ENCODE measurements at regions of chr10 and their contacts with region 1.

Region 1: GRCh38 chr10:6014241-6014761 is 37.0 kb upstream of the IL15RA start:
- DNase-seq: peak; percentile 30
- ATAC-seq: peak; percentile 91
- H3K4me3 ChIP-seq: no peak overlapping the region
- H3K27ac ChIP-seq: no peak overlapping the region
- H3K4me1 ChIP-seq: no peaks in the 10 kb centered on the region
- H3K27me3 ChIP-seq: no peaks in the 10 kb centered on the region; a peak in 1 of 4 replicates
- CTCF ChIP-seq: peak; percentile 68 to 82 (median 77)
- EP300 ChIP-seq: no peak
- POLR2A ChIP-seq: no peak
- RAD21 ChIP-seq: peak; percentile 89

Region 2: DNA sequence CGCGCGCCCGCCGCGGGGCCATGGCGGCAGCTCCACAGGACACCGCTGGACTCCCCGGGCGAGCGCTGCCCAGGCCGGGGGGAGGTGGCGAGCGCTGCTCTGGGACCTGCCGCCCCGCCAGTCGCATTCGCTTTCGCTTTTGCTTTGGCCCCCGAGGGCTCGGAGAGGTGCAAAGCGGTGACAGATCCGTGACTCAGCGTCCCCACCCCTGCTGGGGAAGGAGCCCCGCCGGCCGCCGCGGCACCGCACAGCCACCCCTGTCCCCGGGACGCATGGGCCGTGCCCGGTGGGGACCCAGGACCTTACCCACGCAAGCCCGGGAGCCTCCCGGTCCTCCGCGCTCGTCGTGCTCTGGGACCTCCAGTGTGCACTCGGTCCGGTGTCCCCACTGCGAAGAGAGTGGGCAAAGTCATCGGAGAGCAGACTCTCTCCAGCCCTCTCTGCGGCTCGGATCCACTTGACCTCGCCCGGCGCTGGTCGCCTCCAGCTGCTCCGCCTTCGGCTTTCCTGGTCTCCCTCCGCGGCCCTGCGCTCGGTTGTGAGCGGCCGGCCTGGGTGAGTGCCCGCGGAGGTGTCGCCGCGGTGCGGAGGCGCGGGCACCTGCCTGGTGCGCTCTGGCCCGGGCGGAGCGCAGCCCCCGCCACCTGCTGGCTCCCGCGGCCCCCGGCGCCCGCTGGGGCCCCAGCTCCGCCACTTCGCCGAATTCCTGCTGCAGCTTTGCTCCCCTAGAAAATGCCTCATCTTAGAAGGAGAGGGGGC is 36.7 kb before region 1 on chr10 and contains the start of gene IL15RA:
- CTCF ChIA-PET with region 1: interaction called, 25 read pairs
- POLR2A ChIA-PET with region 1: interaction called, 3 read pairs
- RAD21 ChIA-PET with region 1: interaction called, 9 read pairs
- SMC1A ChIA-PET with region 1: interaction called, 6 read pairs
- in situ Hi-C with region 1: no loop called
- intact Hi-C with region 1: no loop called
- DNase-seq: no peak
- ATAC-seq: peak; percentile 78
- H3K4me3 ChIP-seq: peak within 1 kb of the TSS; percentile 95
- H3K27ac ChIP-seq: peak within 1 kb of the TSS; percentile 88
- H3K4me1 ChIP-seq: peaks cover 12% of the 10 kb centered on the region
- H3K27me3 ChIP-seq: no peaks in the 10 kb centered on the region; a peak in 1 of 4 replicates
- CTCF ChIP-seq: peak; percentile 22 to 54 (median 30); a peak in 5 of 6 replicates
- EP300 ChIP-seq: no peak
- POLR2A ChIP-seq: peak; percentile 65
- RAD21 ChIP-seq: peak; percentile 21; the same call in 1 of the 2 replicates
- polyA plus RNA-seq, gene IL15RA: 2.0 to 4.2 TPM

Region 3: GRCh38 chr10:6033954-6034353 is 19.7 kb after region 1 on chr10:
- CTCF ChIA-PET with region 1: interaction called, 13 read pairs
- POLR2A ChIA-PET with region 1: no interaction called
- RAD21 ChIA-PET with region 1: no interaction called
- SMC1A ChIA-PET with region 1: interaction called, 13 read pairs
- in situ Hi-C with region 1: no loop called
- intact Hi-C with region 1: no loop called
- DNase-seq: no peak
- ATAC-seq: no peak
- H3K4me3 ChIP-seq: no peak overlapping the region
- H3K27ac ChIP-seq: no peak overlapping the region
- H3K4me1 ChIP-seq: peaks cover 12% of the 10 kb centered on the region; the same call in 1 of the 2 replicates
- H3K27me3 ChIP-seq: no peaks in the 10 kb centered on the region
- CTCF ChIP-seq: no peak
- EP300 ChIP-seq: no peak
- POLR2A ChIP-seq: no peak
- RAD21 ChIP-seq: no peak

Region 4: GRCh38 chr10:6062101-6062771 is 47.9 kb after region 1 on chr10 and contains the start of gene IL2RA:
- CTCF ChIA-PET with region 1: interaction called, 16 read pairs
- POLR2A ChIA-PET with region 1: interaction called, 5 read pairs
- RAD21 ChIA-PET with region 1: no interaction called
- SMC1A ChIA-PET with region 1: interaction called, 9 read pairs
- in situ Hi-C with region 1: no loop called
- intact Hi-C with region 1: no loop called
- DNase-seq: no peak
- ATAC-seq: peak; percentile 65
- H3K4me3 ChIP-seq: peak within 1 kb of the TSS; percentile 43; the same call in 1 of the 2 replicates
- H3K27ac ChIP-seq: peak within 1 kb of the TSS; percentile 14; the same call in 1 of the 2 replicates
- H3K4me1 ChIP-seq: peaks cover 28% of the 10 kb centered on the region
- H3K27me3 ChIP-seq: no peaks in the 10 kb centered on the region
- CTCF ChIP-seq: no peak
- EP300 ChIP-seq: no peak
- POLR2A ChIP-seq: no peak
- RAD21 ChIP-seq: no peak
- polyA plus RNA-seq, gene IL2RA: 3.3 to 5.1 TPM

Region 5: DNA sequence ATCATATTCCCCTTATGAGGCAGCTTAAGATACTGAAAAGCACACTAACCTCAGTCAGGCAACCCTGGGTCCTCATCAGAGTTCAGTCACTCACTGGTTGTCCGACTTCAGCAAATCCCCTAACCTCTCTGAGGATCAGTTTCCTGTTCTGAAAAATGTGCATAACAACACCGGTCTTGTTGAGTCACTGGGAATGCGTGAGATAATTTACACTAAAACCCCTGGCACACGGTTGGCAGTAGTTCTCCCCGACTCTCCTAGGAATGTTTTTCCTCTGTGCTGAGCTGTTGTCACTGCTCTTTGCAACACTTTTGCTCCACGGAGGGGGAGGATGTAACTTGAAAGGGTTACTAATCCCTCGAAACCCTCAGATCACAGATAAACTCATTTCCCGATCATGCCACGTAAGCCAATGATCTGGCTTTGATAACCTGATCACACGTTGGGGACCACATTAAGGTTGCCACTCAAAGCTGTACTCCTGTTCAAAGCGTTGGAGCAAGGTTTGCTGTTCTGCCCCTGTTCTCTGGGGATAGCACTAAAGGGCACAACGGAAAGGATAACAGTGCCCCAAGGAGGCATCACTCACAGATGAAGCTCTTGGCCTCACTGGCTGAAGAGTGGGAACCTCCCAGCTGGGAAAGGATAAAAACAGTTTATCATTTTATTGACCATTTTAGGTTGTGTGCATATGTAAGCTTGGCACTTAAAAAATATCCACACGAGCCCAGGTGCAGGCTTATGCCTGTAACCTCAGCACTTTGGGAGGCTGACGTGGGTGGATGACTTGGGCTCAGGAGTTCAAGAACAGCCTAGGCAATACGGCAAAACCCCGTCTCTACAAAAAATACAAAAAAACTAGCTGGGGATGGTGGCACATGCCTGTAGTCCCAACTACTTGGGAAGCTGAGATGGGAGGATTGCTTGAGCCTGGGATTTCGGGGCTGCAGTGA is 69.5 kb after region 1 on chr10:
- CTCF ChIA-PET with region 1: interaction called, 142 read pairs
- POLR2A ChIA-PET with region 1: interaction called, 4 read pairs
- RAD21 ChIA-PET with region 1: interaction called, 45 read pairs
- SMC1A ChIA-PET with region 1: interaction called, 81 read pairs
- in situ Hi-C with region 1: loop called (anchors 5 kb)
- intact Hi-C with region 1: loop called (anchors 1 kb)
- DNase-seq: no peak
- ATAC-seq: no peak
- H3K4me3 ChIP-seq: no peak overlapping the region
- H3K27ac ChIP-seq: no peak overlapping the region
- H3K4me1 ChIP-seq: no peaks in the 10 kb centered on the region
- H3K27me3 ChIP-seq: peaks cover 0 to 6% of the 10 kb centered on the region in 2 experiments; a peak in 2 of 4 replicates
- CTCF ChIP-seq: no peak
- EP300 ChIP-seq: no peak
- POLR2A ChIP-seq: no peak
- RAD21 ChIP-seq: no peak

Region 6: DNA sequence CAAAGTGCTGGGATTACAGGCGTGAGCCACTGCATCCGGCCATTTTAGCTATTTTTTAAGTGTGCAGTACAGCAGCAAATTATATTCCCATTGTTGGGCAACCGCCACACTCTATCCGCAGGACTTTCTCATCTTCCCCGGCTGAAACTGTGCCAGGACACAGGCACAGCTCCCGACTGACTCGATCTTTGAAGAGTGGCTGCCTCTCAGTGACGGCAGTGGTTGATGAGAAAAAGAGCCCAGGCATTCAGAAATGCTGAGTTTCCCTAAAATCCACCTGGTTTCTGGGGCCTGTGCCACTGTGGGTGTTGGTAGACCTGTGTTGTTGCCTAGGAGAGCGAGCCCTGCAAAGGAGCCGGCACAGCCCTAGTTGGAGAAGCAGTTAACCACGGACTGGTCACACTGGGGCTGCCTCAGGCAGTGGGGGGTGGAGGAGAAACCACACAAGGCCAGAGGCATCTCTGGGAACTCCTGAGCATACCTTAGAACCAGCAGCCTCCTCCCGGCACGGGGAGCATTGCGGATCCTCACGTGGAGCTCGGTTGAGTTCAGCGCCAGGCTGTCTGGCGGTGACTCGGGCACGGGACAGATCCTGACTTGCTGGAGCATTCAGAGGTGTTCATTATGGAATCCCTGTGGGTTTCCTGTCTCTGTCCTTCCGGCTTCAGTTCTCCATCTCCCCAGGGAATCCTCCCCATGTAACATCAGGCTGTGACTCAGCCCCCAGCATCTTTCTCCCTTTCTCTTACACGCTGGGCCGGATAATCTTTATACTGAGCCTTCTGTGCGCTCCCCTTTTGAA is 204.6 kb after region 1 on chr10:
- CTCF ChIA-PET with region 1: no interaction called
- POLR2A ChIA-PET with region 1: no interaction called
- RAD21 ChIA-PET with region 1: no interaction called
- SMC1A ChIA-PET with region 1: no interaction called
- in situ Hi-C with region 1: no loop called
- intact Hi-C with region 1: no loop called
- DNase-seq: no peak
- ATAC-seq: no peak
- H3K4me3 ChIP-seq: no peak overlapping the region
- H3K27ac ChIP-seq: no peak overlapping the region
- H3K4me1 ChIP-seq: no peaks in the 10 kb centered on the region
- H3K27me3 ChIP-seq: no peaks in the 10 kb centered on the region
- CTCF ChIP-seq: no peak
- EP300 ChIP-seq: no peak
- POLR2A ChIP-seq: no peak
- RAD21 ChIP-seq: no peak

Measured in GM12878 (cell line).